H1 (cell line): ENCODE measurements at regions of chr1 and their contacts with region 1.

Region 1: DNA sequence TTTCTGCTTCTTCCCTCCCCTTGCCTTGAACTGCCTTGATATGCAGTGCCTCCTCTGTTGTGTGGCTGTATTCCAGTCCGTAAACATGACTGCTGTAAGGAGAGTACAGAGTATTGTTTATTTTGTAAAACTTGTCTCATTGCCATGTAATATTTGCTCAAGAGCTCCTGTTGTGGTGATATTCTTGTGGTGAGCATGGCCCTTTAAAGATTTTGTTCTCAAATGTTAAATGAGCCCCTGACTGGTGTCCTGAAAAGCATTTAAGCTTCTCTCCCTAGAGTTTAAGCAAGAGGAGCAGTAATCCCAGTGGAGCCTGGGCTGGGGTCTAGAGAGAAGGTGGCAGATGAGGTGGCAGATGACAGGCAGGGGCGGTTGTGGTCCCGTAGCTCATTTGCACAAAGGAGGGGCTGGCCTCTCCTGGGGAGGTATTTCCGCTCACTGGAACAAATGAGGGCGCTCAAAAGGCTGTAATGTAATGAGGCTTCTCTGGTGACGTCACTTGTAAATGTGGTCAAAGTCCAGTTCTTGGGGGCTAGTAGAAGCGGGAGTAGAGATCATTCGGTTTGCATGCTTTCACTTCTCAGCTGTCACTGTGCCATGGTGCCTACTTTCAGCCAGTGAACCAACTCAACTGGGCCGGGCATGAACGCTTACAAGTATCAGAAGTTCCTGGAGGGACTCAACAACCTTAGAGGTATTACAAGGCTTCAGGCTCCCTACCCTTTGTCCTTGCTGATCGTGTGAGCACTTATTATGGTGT is 46.0 kb upstream of the MACF1 start:
- DNase-seq: no peak
- H3K4me3 ChIP-seq: peak overlapping the region; percentile 21 to 44 (median 34); a peak in 7 of 8 replicates
- H3K27ac ChIP-seq: peak overlapping the region; percentile 48
- H3K4me1 ChIP-seq: peaks cover 13 to 37% (median 25%) of the 10 kb centered on the region in 4 experiments; a peak in 6 of 7 replicates
- H3K27me3 ChIP-seq: no peaks in the 10 kb centered on the region
- CTCF ChIP-seq: peak in 1 of 3 experiments; percentile 1; a peak in 1 of 4 replicates
- EP300 ChIP-seq: no peak
- POLR2A ChIP-seq: peak in 1 of 2 experiments; percentile 62; a peak in 1 of 3 replicates
- RAD21 ChIP-seq: no peak

Region 2: GRCh38 chr1:39110325-39110851 is 48.1 kb before region 1 on chr1:
- CTCF ChIA-PET with region 1: interaction called, 6 read pairs
- POLR2A ChIA-PET with region 1: interaction called, 15 read pairs
- DNase-seq: no peak
- H3K4me3 ChIP-seq: no peak overlapping the region
- H3K27ac ChIP-seq: no peak overlapping the region
- H3K4me1 ChIP-seq: peaks cover 6 to 20% (median 10%) of the 10 kb centered on the region in 4 experiments; a peak in 5 of 7 replicates
- H3K27me3 ChIP-seq: no peaks in the 10 kb centered on the region
- CTCF ChIP-seq: no peak
- EP300 ChIP-seq: no peak
- POLR2A ChIP-seq: no peak
- RAD21 ChIP-seq: no peak

Region 3: DNA sequence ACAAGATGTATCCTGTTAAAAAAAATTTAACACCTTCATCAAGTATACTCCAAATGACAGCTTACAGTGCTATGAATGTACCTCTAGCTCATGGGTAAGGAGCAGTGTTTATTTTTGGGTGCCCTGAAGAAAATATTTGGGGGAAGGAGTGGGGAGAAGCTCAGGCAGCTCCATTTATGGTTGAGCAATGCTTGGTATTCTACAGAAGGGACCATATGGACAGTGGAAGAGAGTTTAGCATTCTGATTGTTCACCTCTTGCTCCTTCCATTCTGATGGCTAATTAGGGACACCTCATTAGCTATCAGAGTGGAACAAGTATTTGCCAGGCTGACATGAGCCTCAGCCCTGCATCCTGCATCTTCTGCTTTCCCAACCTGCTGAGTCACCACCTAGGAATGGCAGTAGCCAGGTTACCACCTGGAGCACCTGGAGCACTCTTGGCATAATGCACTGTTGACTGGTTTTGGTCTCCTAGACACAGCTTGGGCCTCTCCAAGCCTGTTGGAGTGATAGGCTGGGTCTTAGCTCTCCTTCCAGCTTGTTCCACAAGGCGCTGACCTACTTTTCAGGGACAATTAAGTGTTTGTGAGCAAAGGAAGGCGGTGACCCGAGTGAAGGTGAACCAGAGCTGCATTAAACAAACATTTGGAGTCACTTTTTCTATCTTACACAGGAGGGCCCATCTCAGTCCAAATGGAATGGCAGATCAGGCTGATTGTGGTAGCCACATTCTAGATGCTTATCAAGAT is 15.9 kb before region 1 on chr1:
- CTCF ChIA-PET with region 1: interaction called, 60 read pairs
- POLR2A ChIA-PET with region 1: interaction called, 40 read pairs
- DNase-seq: no peak
- H3K4me3 ChIP-seq: peak overlapping the region in 1 of 4 experiments; percentile 18; a peak in 1 of 8 replicates
- H3K27ac ChIP-seq: peak overlapping the region; percentile 71
- H3K4me1 ChIP-seq: peaks cover 6 to 23% (median 15%) of the 10 kb centered on the region in 4 experiments; a peak in 6 of 7 replicates
- H3K27me3 ChIP-seq: no peaks in the 10 kb centered on the region
- CTCF ChIP-seq: no peak
- EP300 ChIP-seq: no peak
- POLR2A ChIP-seq: peak in 1 of 2 experiments; percentile 48; a peak in 1 of 3 replicates
- RAD21 ChIP-seq: no peak

Region 4: DNA sequence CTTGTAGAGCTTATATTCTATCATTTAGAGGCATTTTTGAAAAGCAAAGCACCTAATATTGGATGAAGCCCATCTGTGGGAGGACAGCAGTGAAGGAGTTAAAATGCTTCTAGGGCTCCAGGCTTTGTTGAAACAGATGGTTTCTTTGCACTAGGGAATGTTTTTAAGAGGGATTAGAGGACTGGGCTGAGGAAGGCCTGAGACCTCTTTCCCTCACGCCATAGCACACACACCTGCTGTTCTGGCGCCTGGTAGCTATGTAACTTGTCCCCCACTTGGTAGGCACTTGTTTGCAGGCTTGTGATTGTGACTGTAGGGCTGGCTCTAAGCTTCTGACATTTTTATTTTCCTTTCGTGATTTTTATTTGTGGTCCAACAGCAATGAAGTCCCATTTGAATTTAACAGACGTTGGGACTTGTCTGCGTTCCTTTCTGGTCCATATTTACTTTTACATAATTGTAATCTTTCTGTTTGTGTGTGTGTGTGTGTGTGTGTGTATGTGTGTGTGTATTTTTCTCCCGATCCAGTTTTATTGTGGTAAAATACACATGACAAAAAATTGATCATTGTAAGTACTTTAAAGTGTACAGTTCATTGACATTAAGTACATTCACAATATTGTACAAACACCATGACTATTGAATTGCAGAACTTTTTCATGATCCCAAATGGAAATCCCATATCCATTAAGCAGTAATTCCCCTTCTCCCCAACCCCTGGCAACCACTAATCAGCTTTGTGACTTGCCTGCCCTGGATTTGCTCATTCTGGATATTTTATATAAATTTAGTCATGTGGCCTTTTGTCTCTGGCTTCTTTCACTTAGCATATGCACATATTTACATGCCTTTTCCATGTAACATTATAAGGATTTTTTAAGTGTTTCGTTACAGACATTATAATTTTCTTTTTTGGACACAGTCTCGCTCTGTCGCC is 12.5 kb after region 1 on chr1:
- CTCF ChIA-PET with region 1: interaction called, 7 read pairs
- POLR2A ChIA-PET with region 1: interaction called, 11 read pairs
- DNase-seq: no peak
- H3K4me3 ChIP-seq: no peak overlapping the region
- H3K27ac ChIP-seq: peak overlapping the region; percentile 8; the same call in 1 of the 2 replicates
- H3K4me1 ChIP-seq: peaks cover 3 to 21% (median 16%) of the 10 kb centered on the region in 4 experiments; a peak in 6 of 7 replicates
- H3K27me3 ChIP-seq: no peaks in the 10 kb centered on the region
- CTCF ChIP-seq: no peak
- EP300 ChIP-seq: peak in 1 of 2 experiments; percentile 64; a peak in 1 of 3 replicates
- POLR2A ChIP-seq: peak in 1 of 2 experiments; percentile 34; a peak in 1 of 3 replicates
- RAD21 ChIP-seq: peak in 1 of 2 experiments; percentile 18; a peak in 1 of 4 replicates